Panc1 (cell line): ENCODE measurements at regions of chr7 and their contacts with region 1.

Region 1: GRCh38 chr7:68504716-68505115 is 1093.6 kb upstream of the AUTS2 start:
- DNase-seq: no peak
- ATAC-seq: no peak
- H3K4me3 ChIP-seq: no peak overlapping the region
- H3K27ac ChIP-seq: no peak overlapping the region
- H3K4me1 ChIP-seq: no peaks in the 10 kb centered on the region
- H3K27me3 ChIP-seq: no peaks in the 10 kb centered on the region
- CTCF ChIP-seq: no peak

Region 2: DNA sequence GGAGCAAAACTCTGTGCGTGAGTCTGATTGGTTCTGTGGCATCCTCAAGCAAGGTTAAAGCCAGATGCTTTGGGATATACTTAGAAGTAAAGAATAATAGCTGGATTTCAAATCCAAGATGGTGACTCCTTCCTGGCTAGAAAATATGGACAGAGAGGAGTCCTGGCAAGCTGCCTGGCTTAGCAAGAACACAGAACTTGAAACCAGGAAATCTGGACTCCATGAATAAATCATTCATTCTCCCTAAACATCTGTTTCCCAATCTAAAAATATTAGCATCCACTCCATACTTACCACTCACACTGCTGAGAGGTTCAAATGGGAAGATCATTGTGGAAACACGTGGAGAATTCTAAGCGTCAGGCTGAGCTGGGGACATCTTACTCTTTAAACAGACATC is 19.4 kb after region 1 on chr7:
- CTCF ChIA-PET with region 1: no interaction called
- POLR2A ChIA-PET with region 1: no interaction called
- in situ Hi-C with region 1: no loop called
- intact Hi-C with region 1: no loop called
- DNase-seq: no peak
- ATAC-seq: no peak
- H3K4me3 ChIP-seq: no peak overlapping the region
- H3K27ac ChIP-seq: no peak overlapping the region
- H3K4me1 ChIP-seq: no peaks in the 10 kb centered on the region
- H3K27me3 ChIP-seq: no peaks in the 10 kb centered on the region
- CTCF ChIP-seq: no peak

Region 3: DNA sequence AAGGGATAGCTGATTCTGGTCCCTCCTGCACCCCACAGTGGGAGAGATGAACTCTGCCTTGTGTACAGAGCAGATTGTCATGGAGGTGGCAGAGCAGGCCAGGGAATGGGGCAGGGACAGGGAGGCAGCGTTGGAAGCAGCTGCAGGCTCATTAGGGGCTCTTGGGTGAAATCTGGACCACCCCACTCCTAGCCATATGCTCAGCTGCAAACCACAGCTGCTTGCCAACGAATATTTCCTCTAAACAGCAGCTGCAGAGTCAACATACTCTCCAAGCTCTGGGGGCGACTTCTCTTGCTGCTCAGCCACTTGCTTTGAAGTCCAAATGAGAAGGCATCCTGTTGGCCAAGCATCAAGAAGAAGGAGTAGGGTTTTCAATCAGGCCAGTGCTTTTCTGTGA is 791.3 kb after region 1 on chr7:
- CTCF ChIA-PET with region 1: no interaction called
- POLR2A ChIA-PET with region 1: no interaction called
- in situ Hi-C with region 1: no loop called
- intact Hi-C with region 1: no loop called
- DNase-seq: no peak
- ATAC-seq: no peak
- H3K4me3 ChIP-seq: no peak overlapping the region
- H3K27ac ChIP-seq: no peak overlapping the region
- H3K4me1 ChIP-seq: no peaks in the 10 kb centered on the region
- H3K27me3 ChIP-seq: no peaks in the 10 kb centered on the region
- CTCF ChIP-seq: no peak

Region 4: DNA sequence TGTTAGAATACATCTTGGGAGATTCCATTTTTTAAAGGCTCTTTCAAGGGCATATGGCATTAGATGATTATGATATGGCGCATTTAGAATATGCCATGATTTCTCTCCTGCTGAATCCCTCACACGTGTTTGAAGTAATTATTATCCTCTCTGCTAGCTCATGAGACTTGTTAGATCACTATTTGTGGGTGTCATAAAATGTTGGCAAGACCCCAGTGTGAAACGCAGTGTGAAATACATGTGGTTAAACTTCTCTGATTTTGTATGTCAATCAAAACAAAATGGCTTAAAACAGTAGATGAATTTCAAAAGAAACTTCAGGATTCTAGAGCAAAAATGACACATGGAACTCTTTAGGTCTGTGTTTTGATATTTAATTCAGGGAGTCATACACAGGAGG is 1654.4 kb after region 1 on chr7:
- CTCF ChIA-PET with region 1: no interaction called
- POLR2A ChIA-PET with region 1: interaction called, 12 read pairs
- in situ Hi-C with region 1: no loop called
- intact Hi-C with region 1: no loop called
- DNase-seq: no peak
- ATAC-seq: no peak
- H3K4me3 ChIP-seq: no peak overlapping the region
- H3K27ac ChIP-seq: no peak overlapping the region
- H3K4me1 ChIP-seq: no peaks in the 10 kb centered on the region
- H3K27me3 ChIP-seq: no peaks in the 10 kb centered on the region; the same call in 1 of the 2 replicates
- CTCF ChIP-seq: no peak